K562 (cell line): ENCODE measurements at regions of chr18 and their contacts with region 1.

Region 1: GRCh38 chr18:4605212-4605611 is 150.1 kb upstream of the DLGAP1 start:
- DNase-seq: no peak
- ATAC-seq: no peak
- H3K4me3 ChIP-seq: no peak overlapping the region
- H3K27ac ChIP-seq: no peak overlapping the region
- H3K4me1 ChIP-seq: no peaks in the 10 kb centered on the region
- H3K27me3 ChIP-seq: no peaks in the 10 kb centered on the region
- CTCF ChIP-seq: no peak
- EP300 ChIP-seq: no peak
- POLR2A ChIP-seq: no peak
- RAD21 ChIP-seq: no peak

Region 2: GRCh38 chr18:4551001-4551360 is 54.2 kb before region 1 on chr18:
- CTCF ChIA-PET with region 1: no interaction called
- POLR2A ChIA-PET with region 1: no interaction called
- in situ Hi-C with region 1: no loop called
- intact Hi-C with region 1: loop called (anchors 10 kb)
- DNase-seq: no peak
- ATAC-seq: no peak
- H3K4me3 ChIP-seq: no peak overlapping the region
- H3K27ac ChIP-seq: no peak overlapping the region
- H3K4me1 ChIP-seq: no peaks in the 10 kb centered on the region
- H3K27me3 ChIP-seq: no peaks in the 10 kb centered on the region
- CTCF ChIP-seq: no peak
- EP300 ChIP-seq: no peak
- POLR2A ChIP-seq: no peak
- RAD21 ChIP-seq: no peak